ENCODE measurements at regions of chr1 and their contacts with region 1.

Region 1: GRCh38 chr1:226034482-226034881 is 28.0 kb upstream of the H3-3A start:
- DNase-seq: peak; percentile 85 to 96
- H3K4me3 ChIP-seq: no peak overlapping the region
- H3K27ac ChIP-seq: peak overlapping the region; percentile 66 to 77
- H3K4me1 ChIP-seq: peaks cover 0 to 12% of the 10 kb centered on the region in 2 donors
- H3K27me3 ChIP-seq: no peaks in the 10 kb centered on the region
- CTCF ChIP-seq: no peak

Region 2: DNA sequence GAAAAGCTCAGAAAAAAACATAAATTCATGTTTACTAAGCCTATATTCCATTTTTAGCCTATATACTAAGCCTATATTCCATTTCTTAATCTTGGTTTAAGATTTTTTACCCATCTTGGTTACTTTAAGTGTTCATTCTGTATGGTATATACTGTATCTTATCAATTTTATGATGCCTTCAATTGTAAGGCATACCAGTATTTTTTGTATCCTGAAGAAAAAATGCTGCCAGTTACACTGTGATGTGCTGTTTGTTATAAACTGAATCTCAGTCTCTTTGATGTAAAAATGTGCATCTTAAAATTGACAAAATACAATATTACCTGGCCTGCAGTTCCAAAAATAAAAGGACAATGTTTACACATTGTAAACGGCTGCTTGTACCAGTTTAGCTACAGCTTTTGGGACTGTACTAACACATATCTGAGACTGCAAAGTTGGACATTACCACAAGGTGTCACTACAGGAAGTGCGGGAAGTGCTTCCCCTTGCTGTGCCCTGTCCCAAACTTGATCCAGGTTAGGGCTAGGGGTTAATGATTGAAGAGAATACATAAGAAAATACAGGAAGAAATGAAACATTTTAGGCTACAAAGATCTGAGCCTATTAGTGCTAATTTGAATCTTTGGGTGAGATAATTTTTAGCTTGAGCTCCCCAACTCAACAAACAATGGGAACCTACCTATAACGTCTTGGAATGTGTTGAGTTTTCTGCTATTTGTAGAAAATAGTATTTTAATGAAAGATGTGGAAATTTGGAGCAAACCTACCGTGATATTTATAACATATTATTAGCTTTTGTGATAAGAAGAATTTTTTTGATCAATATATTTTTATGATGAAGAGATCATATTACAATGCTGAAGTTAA is 715.5 kb before region 1 on chr1:
- intact Hi-C with region 1: no loop called
- DNase-seq: no peak
- H3K4me3 ChIP-seq: no peak overlapping the region
- H3K27ac ChIP-seq: no peak overlapping the region
- H3K4me1 ChIP-seq: no peaks in the 10 kb centered on the region
- H3K27me3 ChIP-seq: no peaks in the 10 kb centered on the region
- CTCF ChIP-seq: peak; percentile 24 to 56 (median 30)

Region 3: GRCh38 chr1:225794954-225795353 is 239.5 kb before region 1 on chr1:
- intact Hi-C with region 1: no loop called
- DNase-seq: no peak
- H3K4me3 ChIP-seq: no peak overlapping the region
- H3K27ac ChIP-seq: no peak overlapping the region
- H3K4me1 ChIP-seq: no peaks in the 10 kb centered on the region
- H3K27me3 ChIP-seq: no peaks in the 10 kb centered on the region
- CTCF ChIP-seq: no peak

Region 4: DNA sequence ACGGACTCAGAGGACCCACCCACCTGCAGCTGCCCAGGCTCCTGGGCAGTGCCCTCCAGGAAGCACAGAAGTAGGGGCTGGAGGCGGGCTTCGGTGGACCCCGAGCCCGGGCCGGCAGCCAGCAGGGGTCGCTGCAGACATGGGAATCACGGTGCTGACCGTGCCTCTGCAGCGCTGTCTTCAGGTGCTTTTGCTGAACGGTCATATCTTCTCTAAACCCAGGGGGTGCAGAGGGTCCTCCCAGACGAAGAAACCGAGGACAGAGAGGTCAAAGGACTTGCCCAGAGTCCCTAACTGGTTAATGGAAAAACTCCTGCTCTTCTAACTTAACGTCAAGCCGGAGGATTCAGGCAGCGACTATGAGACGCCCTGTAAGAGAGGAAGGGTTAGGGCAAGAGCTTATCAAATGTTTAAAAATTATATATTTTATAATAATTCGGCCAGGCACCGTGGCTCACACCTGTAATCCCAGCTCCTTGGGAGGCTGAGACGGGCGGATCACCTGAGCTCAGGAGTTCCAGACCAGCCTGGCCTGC is 72.0 kb before region 1 on chr1:
- intact Hi-C with region 1: no loop called
- DNase-seq: no peak
- H3K4me3 ChIP-seq: no peak overlapping the region
- H3K27ac ChIP-seq: no peak overlapping the region
- H3K4me1 ChIP-seq: no peaks in the 10 kb centered on the region
- H3K27me3 ChIP-seq: no peaks in the 10 kb centered on the region
- CTCF ChIP-seq: peak; percentile 12 to 42 (median 32)

Region 5: GRCh38 chr1:225999227-225999911 is 35.1 kb before region 1 on chr1 and contains the start of gene SDE2:
- intact Hi-C with region 1: loop called (anchors 1 kb)
- DNase-seq: peak; percentile 98 to 100
- H3K4me3 ChIP-seq: peak within 1 kb of the TSS; percentile 84 to 96
- H3K27ac ChIP-seq: peak within 1 kb of the TSS; percentile 96 to 97
- H3K4me1 ChIP-seq: peaks cover 0 to 27% of the 10 kb centered on the region in 2 donors
- H3K27me3 ChIP-seq: no peaks in the 10 kb centered on the region
- CTCF ChIP-seq: no peak
- total RNA-seq, gene SDE2: 12.3 TPM

Region 6: GRCh38 chr1:226097866-226098625 is 63.6 kb after region 1 on chr1:
- intact Hi-C with region 1: no loop called
- DNase-seq: no peak
- H3K4me3 ChIP-seq: no peak overlapping the region
- H3K27ac ChIP-seq: no peak overlapping the region
- H3K4me1 ChIP-seq: no peaks in the 10 kb centered on the region
- H3K27me3 ChIP-seq: no peaks in the 10 kb centered on the region
- CTCF ChIP-seq: no peak